Naive thymus-derived CD4-positive, alpha-beta T cell (primary cell): ENCODE measurements at regions of chr2 and their contacts with region 1.

Region 1: DNA sequence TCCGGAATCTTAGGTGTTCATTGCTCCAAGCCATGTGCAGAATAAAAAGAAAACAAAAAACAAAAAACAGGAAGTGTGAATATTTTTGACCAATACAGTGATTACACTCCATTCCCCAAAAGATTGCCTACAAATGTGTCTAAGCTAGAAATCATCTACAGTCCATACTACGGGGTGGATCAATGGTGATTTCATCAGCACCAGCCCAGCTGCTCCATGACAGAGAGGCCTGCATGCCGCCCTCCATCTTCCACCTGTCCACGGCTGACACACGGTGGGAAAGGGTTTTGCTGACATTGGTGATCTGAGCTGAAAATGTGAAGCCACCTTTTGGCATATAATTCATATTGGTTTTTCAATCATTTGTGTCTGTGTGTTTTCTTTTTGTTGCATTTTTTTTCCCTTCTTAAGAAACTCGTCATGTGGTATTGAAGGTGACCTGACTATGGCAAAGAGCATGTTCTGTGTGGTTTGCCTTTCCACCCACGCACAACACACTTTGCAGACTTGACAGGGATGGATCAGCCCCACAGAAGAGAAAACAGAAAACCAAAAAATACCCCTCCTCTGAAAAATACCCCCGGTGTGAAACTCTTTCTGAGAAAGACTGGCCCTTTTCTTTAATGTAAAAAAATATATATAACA is 533.1 kb downstream of the RNF144A start:
- DNase-seq: peak in 8 of 9 donors; percentile 66 to 88 (median 72)
- ATAC-seq: peak; percentile 91
- H3K4me3 ChIP-seq: no peak overlapping the region
- H3K4me3 Mint-ChIP-seq: peak overlapping the region; percentile 39 to 87 (median 77)
- H3K27ac ChIP-seq: peak overlapping the region; percentile 60
- H3K27ac Mint-ChIP-seq: peak overlapping the region; percentile 90 to 98 (median 96)
- H3K4me1 ChIP-seq: peaks cover 41 to 65% of the 10 kb centered on the region in 2 donors
- H3K4me1 Mint-ChIP-seq: peaks cover 44 to 93% (median 78%) of the 10 kb centered on the region in 7 donors
- H3K27me3 ChIP-seq: no peaks in the 10 kb centered on the region
- H3K27me3 Mint-ChIP-seq: no peaks in the 10 kb centered on the region

Region 2: GRCh38 chr2:5495586-5495985 is 1954.7 kb before region 1 on chr2:
- CTCF ChIA-PET with region 1: no interaction called
- POLR2A ChIA-PET with region 1: no interaction called
- intact Hi-C with region 1: no loop called
- DNase-seq: no peak
- ATAC-seq: no peak
- H3K4me3 ChIP-seq: no peak overlapping the region
- H3K4me3 Mint-ChIP-seq: no peak overlapping the region
- H3K27ac ChIP-seq: no peak overlapping the region
- H3K27ac Mint-ChIP-seq: peak overlapping the region in 1 of 9 donors; percentile 53
- H3K4me1 ChIP-seq: no peaks in the 10 kb centered on the region
- H3K4me1 Mint-ChIP-seq: no peaks in the 10 kb centered on the region
- H3K27me3 ChIP-seq: no peaks in the 10 kb centered on the region
- H3K27me3 Mint-ChIP-seq: no peaks in the 10 kb centered on the region

Region 3: DNA sequence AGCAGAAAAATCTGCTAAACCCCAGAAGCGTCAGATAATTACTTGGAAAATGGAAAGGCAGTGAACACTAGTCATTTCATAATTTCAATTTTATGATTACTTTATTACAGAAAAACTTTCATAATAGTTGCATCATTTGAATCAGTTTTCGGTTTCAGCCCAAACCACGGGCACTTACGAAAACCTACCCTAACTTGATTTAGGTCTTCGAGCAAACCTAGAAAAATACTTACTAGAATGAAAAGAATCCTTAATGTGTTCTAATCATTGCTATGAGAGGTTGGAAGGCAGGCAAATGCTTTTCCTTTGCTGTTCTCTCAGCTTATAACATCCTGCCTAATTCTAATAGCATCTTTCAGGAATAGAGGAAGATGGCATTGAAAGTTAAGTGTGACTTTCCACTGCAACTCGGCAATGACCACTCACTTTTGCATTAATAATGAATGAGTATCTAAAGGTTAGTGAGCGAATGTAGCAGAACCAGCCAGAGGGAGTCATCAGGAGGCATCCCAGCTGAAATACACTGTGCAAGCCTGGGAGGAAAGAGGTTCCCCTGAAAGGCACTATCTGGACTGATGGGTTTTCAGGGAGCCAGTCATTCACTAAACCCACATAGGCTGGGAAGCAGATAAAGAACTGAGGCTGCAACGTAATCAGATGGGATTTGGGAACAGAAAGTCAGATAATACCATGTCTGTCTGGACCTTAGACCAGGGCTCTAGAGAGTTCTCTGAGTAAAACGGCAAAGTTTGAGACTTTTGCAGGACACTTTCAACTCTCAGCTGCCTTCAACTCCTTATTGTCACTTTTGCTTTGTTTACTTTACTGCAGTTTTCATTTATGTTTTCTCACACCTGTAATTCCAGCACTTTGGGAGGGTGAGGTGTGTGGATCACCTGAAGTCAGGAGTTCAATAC is 12.3 kb before region 1 on chr2:
- CTCF ChIA-PET with region 1: interaction called, 9 read pairs
- POLR2A ChIA-PET with region 1: interaction called, 13 read pairs
- intact Hi-C with region 1: loop called (anchors 1 kb)
- DNase-seq: no peak
- ATAC-seq: peak; percentile 27
- H3K4me3 ChIP-seq: peak overlapping the region; percentile 4
- H3K4me3 Mint-ChIP-seq: peak overlapping the region in 6 of 10 donors; percentile 19 to 65 (median 37)
- H3K27ac ChIP-seq: no peak overlapping the region
- H3K27ac Mint-ChIP-seq: peak overlapping the region in 7 of 9 donors; percentile 4 to 89 (median 60)
- H3K4me1 ChIP-seq: peaks cover 7 to 46% of the 10 kb centered on the region in 2 donors
- H3K4me1 Mint-ChIP-seq: peaks cover 4 to 72% (median 54%) of the 10 kb centered on the region in 7 donors
- H3K27me3 ChIP-seq: no peaks in the 10 kb centered on the region
- H3K27me3 Mint-ChIP-seq: no peaks in the 10 kb centered on the region

Region 4: DNA sequence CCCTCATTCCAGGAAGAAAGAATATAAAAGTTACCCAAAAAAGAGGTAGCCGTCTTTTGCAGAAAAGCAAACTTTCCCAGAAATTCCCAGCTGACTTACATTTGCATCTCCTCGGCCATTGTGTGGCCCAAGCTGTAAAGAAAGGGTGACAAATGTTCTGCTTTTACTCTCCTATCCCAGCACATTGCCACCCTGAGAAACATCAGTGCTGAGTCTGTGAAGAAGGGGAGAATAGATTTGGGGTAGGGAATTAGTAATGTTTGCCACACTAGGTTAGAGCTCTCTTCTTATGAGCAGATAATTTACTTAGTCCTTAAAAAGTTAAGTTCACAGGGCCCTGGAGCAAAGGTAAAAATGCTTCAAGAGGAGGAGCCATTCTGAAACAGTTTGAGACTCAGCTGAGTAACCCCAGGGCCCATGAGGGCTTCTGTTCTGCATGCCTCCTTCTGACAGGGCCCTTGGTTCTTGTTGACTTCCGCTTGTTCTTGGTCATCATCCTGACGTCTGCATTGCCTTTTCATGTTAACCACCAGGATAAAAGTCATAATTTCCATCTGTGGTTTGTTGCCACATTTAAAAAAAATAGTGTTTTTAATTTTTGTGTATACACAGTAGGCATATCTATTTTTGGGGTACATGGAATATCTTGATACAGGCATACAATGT is 17.6 kb after region 1 on chr2:
- CTCF ChIA-PET with region 1: no interaction called
- POLR2A ChIA-PET with region 1: interaction called, 3 read pairs
- intact Hi-C with region 1: loop called in 1 of 2 experiments (anchors 1 kb)
- DNase-seq: peak in 7 of 9 donors; percentile 23 to 68 (median 44)
- ATAC-seq: peak; percentile 85
- H3K4me3 ChIP-seq: no peak overlapping the region
- H3K4me3 Mint-ChIP-seq: peak overlapping the region in 4 of 10 donors; percentile 35 to 66 (median 52)
- H3K27ac ChIP-seq: no peak overlapping the region
- H3K27ac Mint-ChIP-seq: peak overlapping the region; percentile 50 to 94 (median 78)
- H3K4me1 ChIP-seq: no peaks in the 10 kb centered on the region
- H3K4me1 Mint-ChIP-seq: peaks cover 9 to 41% (median 26%) of the 10 kb centered on the region in 7 donors
- H3K27me3 ChIP-seq: no peaks in the 10 kb centered on the region
- H3K27me3 Mint-ChIP-seq: no peaks in the 10 kb centered on the region

Region 5: GRCh38 chr2:7517088-7517487 is 66.8 kb after region 1 on chr2:
- CTCF ChIA-PET with region 1: no interaction called
- POLR2A ChIA-PET with region 1: no interaction called
- intact Hi-C with region 1: loop called (anchors 1 kb)
- DNase-seq: peak in 7 of 9 donors; percentile 28 to 63 (median 49)
- ATAC-seq: peak; percentile 89
- H3K4me3 ChIP-seq: peak overlapping the region; percentile 12
- H3K4me3 Mint-ChIP-seq: peak overlapping the region; percentile 20 to 82 (median 77)
- H3K27ac ChIP-seq: peak overlapping the region; percentile 35
- H3K27ac Mint-ChIP-seq: peak overlapping the region; percentile 71 to 97 (median 88)
- H3K4me1 ChIP-seq: peaks cover 0 to 16% of the 10 kb centered on the region in 2 donors
- H3K4me1 Mint-ChIP-seq: peaks cover 13 to 68% (median 51%) of the 10 kb centered on the region in 7 donors
- H3K27me3 ChIP-seq: no peaks in the 10 kb centered on the region
- H3K27me3 Mint-ChIP-seq: no peaks in the 10 kb centered on the region

Region 6: GRCh38 chr2:7672027-7672684 is 221.8 kb after region 1 on chr2:
- CTCF ChIA-PET with region 1: interaction called, 3 read pairs
- POLR2A ChIA-PET with region 1: no interaction called
- intact Hi-C with region 1: loop called in 1 of 2 experiments (anchors 1 kb)
- DNase-seq: peak in 8 of 9 donors; percentile 17 to 69 (median 47)
- ATAC-seq: peak; percentile 61
- H3K4me3 ChIP-seq: no peak overlapping the region
- H3K4me3 Mint-ChIP-seq: peak overlapping the region; percentile 16 to 84 (median 69)
- H3K27ac ChIP-seq: no peak overlapping the region
- H3K27ac Mint-ChIP-seq: peak overlapping the region; percentile 77 to 91 (median 87)
- H3K4me1 ChIP-seq: peaks cover 9 to 19% of the 10 kb centered on the region in 2 donors
- H3K4me1 Mint-ChIP-seq: peaks cover 24 to 59% (median 40%) of the 10 kb centered on the region in 7 donors
- H3K27me3 ChIP-seq: no peaks in the 10 kb centered on the region
- H3K27me3 Mint-ChIP-seq: no peaks in the 10 kb centered on the region

Region 7: GRCh38 chr2:7725171-7725849 is 275.0 kb after region 1 on chr2:
- CTCF ChIA-PET with region 1: no interaction called
- POLR2A ChIA-PET with region 1: no interaction called
- intact Hi-C with region 1: loop called in 1 of 2 experiments (anchors 5 kb)
- DNase-seq: peak in 5 of 9 donors; percentile 17 to 51 (median 38)
- ATAC-seq: peak; percentile 78
- H3K4me3 ChIP-seq: peak overlapping the region; percentile 25
- H3K4me3 Mint-ChIP-seq: peak overlapping the region in 9 of 10 donors; percentile 26 to 86 (median 58)
- H3K27ac ChIP-seq: no peak overlapping the region
- H3K27ac Mint-ChIP-seq: peak overlapping the region; percentile 8 to 89 (median 65)
- H3K4me1 ChIP-seq: peaks cover 17 to 34% of the 10 kb centered on the region in 2 donors
- H3K4me1 Mint-ChIP-seq: peaks cover 13 to 63% (median 34%) of the 10 kb centered on the region in 7 donors
- H3K27me3 ChIP-seq: no peaks in the 10 kb centered on the region
- H3K27me3 Mint-ChIP-seq: no peaks in the 10 kb centered on the region